ENCODE measurements at regions of chr10 and their contacts with region 1.

Region 1: GRCh38 chr10:102167861-102168260 is 15.7 kb downstream of the NOLC1 start:
- DNase-seq: no peak
- ATAC-seq: no peak
- H3K4me3 ChIP-seq: no peak overlapping the region
- H3K27ac ChIP-seq: no peak overlapping the region
- H3K4me1 ChIP-seq: no peaks in the 10 kb centered on the region
- H3K27me3 ChIP-seq: no peaks in the 10 kb centered on the region

Region 2: DNA sequence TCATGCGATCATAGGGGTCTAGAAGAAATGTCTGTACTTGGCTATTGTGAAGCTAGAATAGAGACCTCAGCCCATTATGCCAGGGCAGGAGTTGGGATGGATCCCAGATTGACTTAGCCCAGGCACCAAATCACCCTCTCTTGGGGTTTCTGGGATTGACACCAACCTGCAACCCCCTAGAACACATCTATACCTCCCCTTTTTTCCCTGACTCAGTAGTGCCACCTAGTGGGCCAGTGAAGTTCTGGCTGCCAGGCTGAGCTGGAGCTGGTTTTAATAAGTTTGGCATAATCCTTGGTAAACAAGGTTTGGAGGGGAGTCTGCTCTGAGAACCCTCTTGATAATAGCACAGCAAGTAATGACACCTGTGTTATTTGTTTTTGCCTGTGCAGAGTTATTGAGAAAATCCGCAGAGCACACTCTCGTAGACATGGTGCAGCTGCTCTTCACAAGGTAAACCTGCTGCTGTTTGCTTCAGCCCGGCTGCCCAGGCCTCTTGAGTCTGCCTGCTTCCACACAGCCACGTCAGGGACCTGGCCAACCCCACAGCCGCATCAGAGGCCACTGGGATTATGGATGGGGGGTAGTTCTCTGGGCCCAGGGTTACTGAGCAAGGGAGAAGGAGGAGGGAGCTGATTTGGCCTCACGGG is 184.3 kb after region 1 on chr10:
- intact Hi-C with region 1: loop called in 1 of 2 experiments (anchors 10 kb)
- DNase-seq: peak; percentile 60 to 80
- ATAC-seq: peak; percentile 76
- H3K4me3 ChIP-seq: no peak overlapping the region
- H3K27ac ChIP-seq: no peak overlapping the region
- H3K4me1 ChIP-seq: no peaks in the 10 kb centered on the region
- H3K27me3 ChIP-seq: no peaks in the 10 kb centered on the region

Region 3: DNA sequence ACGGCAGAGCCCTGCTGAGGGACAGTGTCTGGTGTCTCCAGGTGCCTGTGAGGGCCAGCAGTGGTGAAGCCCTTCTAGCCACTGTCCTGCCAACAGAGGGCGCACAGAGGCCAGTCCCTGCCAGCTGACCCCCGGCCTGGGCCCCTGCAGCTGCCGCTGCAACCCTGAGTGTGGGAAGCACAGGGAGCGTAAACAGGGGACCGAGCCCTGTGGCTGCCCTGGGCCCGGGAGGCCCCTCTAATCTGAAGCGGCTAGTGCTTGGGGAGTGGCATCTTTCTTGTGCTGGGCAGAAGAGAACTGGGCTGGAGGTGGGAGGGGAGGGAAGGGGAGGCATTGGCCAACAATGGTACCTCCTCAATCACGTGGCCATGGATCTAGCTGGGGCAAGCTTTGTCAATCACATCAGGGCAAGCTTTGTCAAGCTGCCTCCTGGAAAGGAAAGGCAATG is 511.0 kb after region 1 on chr10:
- intact Hi-C with region 1: no loop called
- DNase-seq: peak; percentile 82 to 86
- ATAC-seq: peak; percentile 49
- H3K4me3 ChIP-seq: no peak overlapping the region
- H3K27ac ChIP-seq: no peak overlapping the region
- H3K4me1 ChIP-seq: peaks cover 0 to 3% of the 10 kb centered on the region in 2 donors
- H3K27me3 ChIP-seq: no peaks in the 10 kb centered on the region